ENCODE measurements at regions of chr6 and their contacts with region 1.

Region 1: DNA sequence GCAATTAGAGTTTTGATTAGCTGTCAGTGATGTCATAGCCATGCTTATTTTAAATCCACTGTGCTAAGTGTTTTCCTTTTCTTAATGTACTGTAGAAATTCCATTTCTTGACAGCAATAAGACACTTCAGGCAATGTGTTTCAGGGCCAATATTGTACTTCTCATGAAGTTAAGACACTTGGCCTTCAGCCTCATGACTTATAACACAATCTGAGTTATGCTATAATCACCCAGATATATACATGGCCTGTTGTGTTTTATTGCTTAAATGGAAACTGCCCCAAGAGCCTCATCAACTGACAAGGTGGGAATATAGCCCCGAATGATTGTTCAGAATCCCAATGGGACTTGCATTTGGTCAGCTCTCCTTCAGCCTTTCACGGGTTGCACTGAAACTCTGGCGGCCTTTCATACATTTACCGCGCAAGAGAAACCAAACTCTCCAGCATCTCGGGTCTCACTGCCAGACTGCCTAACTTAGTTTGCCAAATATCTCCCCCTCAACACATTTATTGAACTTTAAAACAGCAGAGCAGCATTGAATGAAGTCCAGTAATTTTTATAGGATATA is 44.2 kb upstream of the TBX18 start:
- DNase-seq: no peak
- ATAC-seq: no peak
- H3K4me3 ChIP-seq: no peak overlapping the region
- H3K27ac ChIP-seq: no peak overlapping the region
- H3K4me1 ChIP-seq: no peaks in the 10 kb centered on the region
- H3K27me3 ChIP-seq: no peaks in the 10 kb centered on the region
- CTCF ChIP-seq: no peak
- EP300 ChIP-seq: no peak
- POLR2A ChIP-seq: no peak
- RAD21 ChIP-seq: no peak

Region 2: DNA sequence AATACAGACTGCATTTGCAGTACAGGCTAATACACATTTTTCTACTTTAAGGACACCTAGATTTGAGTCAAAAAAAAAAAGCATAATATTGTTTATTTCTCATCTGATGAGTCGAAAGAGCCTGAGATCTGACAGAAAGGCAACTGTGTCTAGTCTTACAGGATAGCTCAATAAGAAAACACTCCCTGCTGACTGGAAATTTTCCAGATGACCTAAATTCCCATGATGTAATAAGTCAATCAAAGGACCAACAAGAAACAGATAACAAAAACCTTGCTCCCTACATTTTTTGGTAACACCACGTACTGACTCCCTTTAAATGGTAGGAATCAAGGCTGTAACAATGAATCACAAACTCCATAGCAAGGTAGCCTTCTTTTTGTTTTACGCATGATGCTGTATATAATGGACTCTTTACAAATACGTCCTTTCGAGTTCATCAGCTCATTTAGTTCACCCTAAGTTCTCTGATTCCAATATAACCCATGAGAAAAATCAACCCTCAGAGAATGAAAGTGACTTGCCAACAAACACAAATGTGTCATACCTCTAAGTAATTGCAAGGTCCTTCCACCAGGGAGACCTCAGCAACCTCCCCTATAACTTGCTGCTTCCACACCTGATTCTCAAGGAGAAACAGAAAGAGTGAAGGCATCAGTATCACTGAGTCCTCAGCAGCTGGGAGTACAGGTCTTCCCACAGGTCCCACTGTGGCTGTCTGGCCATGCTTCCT is 56.3 kb before region 1 on chr6:
- CTCF ChIA-PET with region 1: no interaction called
- POLR2A ChIA-PET with region 1: no interaction called
- in situ Hi-C with region 1: no loop called
- intact Hi-C with region 1: no loop called
- DNase-seq: no peak
- ATAC-seq: no peak
- H3K4me3 ChIP-seq: no peak overlapping the region
- H3K27ac ChIP-seq: no peak overlapping the region
- H3K4me1 ChIP-seq: no peaks in the 10 kb centered on the region
- H3K27me3 ChIP-seq: no peaks in the 10 kb centered on the region
- CTCF ChIP-seq: no peak
- EP300 ChIP-seq: no peak
- POLR2A ChIP-seq: no peak
- RAD21 ChIP-seq: no peak

Region 3: GRCh38 chr6:84779380-84779779 is 29.2 kb before region 1 on chr6:
- CTCF ChIA-PET with region 1: no interaction called
- POLR2A ChIA-PET with region 1: no interaction called
- in situ Hi-C with region 1: no loop called
- intact Hi-C with region 1: loop called (anchors 1 kb)
- DNase-seq: no peak
- ATAC-seq: no peak
- H3K4me3 ChIP-seq: no peak overlapping the region
- H3K27ac ChIP-seq: no peak overlapping the region
- H3K4me1 ChIP-seq: no peaks in the 10 kb centered on the region
- H3K27me3 ChIP-seq: no peaks in the 10 kb centered on the region
- CTCF ChIP-seq: no peak
- EP300 ChIP-seq: no peak
- POLR2A ChIP-seq: no peak
- RAD21 ChIP-seq: no peak

Region 4: DNA sequence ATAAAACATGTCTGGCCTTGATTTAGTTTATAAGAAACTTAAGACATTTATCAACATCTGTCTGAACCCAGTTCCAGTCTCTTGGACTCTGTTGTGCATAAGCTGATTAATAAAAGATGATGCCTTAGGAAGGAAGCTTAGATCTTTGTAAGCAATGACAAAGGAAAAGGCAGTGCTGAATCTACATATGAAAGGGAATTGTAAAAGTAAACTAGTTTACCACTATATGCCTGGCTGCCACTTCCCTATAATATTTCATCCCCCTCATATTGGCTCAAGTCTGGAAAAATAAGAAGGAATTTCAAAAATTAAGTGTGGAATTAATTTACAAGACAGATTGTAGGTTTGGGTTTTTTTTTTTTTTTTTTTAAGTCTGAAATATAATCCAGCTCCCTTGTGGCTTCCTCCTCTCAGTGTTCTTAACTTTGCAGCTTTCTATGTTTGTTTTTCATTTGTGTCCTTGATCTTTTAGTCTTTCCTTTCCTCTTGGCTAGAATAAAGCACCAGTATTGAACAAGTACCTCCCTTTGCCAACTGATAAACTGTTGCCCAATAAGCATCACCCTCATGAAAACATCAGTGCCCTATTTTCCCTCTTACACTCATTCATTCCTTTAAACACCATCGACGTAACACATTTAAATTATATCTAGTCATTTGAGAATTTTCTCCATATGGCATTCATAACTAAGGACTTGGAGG is 102.5 kb after region 1 on chr6:
- CTCF ChIA-PET with region 1: no interaction called
- POLR2A ChIA-PET with region 1: no interaction called
- in situ Hi-C with region 1: no loop called
- intact Hi-C with region 1: no loop called
- DNase-seq: peak; percentile 12
- ATAC-seq: peak; percentile 42; the same call in 2 of the 3 replicates
- H3K4me3 ChIP-seq: no peak overlapping the region
- H3K27ac ChIP-seq: no peak overlapping the region
- H3K4me1 ChIP-seq: peaks cover 14% of the 10 kb centered on the region
- H3K27me3 ChIP-seq: no peaks in the 10 kb centered on the region
- CTCF ChIP-seq: no peak
- EP300 ChIP-seq: no peak
- POLR2A ChIP-seq: no peak
- RAD21 ChIP-seq: no peak